Posterior vena cava (tissue), 2 donors: ENCODE measurements at regions of chrX and their contacts with region 1.

Region 1: DNA sequence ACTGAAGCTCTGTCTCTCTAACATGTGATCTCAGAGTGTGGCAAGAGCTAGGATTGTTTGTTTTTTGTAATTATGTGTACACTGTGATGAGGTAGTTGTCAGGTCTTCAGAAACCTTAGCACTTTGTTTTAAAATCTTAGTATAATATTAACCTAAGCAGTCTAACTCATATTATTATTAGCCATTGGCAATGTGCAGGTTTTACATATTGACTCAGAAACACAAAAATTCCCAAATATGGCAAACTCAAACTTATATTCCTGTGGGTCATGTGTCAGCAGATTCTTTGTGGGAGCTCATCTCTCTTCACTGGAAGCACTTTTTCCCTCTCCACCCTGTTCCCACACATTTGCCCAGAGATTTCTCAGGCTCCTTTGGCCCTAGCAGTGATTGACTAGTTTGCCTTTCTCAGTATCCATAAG is 8.2 kb upstream of the PWWP3B start:
- DNase-seq: no peak

Region 2: GRCh38 chrX:106331606-106332005 is 171.7 kb after region 1 on chrX:
- intact Hi-C with region 1: no loop called
- DNase-seq: no peak

Region 3: DNA sequence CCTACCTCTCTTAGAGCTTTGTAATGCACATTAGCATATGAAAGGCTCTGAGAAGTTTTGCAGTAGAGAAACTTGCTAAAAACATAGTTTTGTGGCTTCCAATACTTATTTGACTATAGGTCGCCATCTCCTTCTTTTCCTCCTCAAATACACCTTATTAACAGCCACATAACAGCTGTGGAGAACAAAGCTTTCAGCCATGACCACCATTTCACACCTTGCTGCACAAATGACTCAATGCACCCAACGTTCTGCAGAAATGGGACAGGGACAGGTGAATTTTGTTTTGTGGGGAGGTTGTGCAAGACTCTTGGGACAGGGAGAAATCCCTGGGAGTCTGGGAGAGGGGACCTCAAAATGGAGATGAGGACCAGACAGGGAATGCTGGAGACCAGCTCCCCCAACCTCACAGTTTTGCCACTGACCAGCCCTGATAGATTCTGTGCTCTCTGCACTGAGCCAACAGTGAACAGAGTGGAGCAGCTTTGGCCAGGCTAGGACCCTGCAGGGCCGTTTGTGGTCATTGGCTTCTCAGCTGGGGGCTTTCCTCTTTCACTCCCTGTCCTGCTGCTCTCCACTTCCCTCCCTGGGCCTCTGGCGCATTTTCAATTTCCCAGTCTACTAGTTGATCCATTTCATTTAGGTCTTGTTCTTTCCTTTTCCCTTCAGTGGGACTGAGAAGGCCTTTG is 1306.2 kb after region 1 on chrX:
- intact Hi-C with region 1: loop called in 1 of 2 experiments (anchors 5 kb)
- DNase-seq: no peak